Activated CD4-positive, alpha-beta memory T cell treated with anti-CD3 and anti-CD28 coated beads for 36 hours (primary cell): ENCODE measurements at regions of chr13 and their contacts with region 1.

Region 1: GRCh38 chr13:48492470-48493065 is 40.3 kb downstream of the RCBTB2 start:
- DNase-seq: peak; percentile 80
- H3K4me3 Mint-ChIP-seq: no peak overlapping the region
- H3K27ac Mint-ChIP-seq: no peak overlapping the region
- H3K4me1 Mint-ChIP-seq: peaks cover 41% of the 10 kb centered on the region
- H3K27me3 Mint-ChIP-seq: no peaks in the 10 kb centered on the region

Region 2: GRCh38 chr13:48412881-48413351 is 79.7 kb before region 1 on chr13 and contains the start of gene LPAR6:
- CTCF ChIA-PET with region 1: no interaction called
- POLR2A ChIA-PET with region 1: no interaction called
- intact Hi-C with region 1: loop called (anchors 2 kb)
- DNase-seq: peak; percentile 23
- H3K4me3 Mint-ChIP-seq: peak within 1 kb of the TSS; percentile 94
- H3K27ac Mint-ChIP-seq: peak within 1 kb of the TSS; percentile 97
- H3K4me1 Mint-ChIP-seq: peaks cover 41% of the 10 kb centered on the region
- H3K27me3 Mint-ChIP-seq: no peaks in the 10 kb centered on the region
- total RNA-seq, gene LPAR6: 8.8 TPM

Region 3: GRCh38 chr13:48448959-48449614 is 43.5 kb before region 1 on chr13:
- CTCF ChIA-PET with region 1: no interaction called
- POLR2A ChIA-PET with region 1: no interaction called
- intact Hi-C with region 1: loop called (anchors 2 kb)
- DNase-seq: no peak
- H3K4me3 Mint-ChIP-seq: no peak overlapping the region
- H3K27ac Mint-ChIP-seq: no peak overlapping the region
- H3K4me1 Mint-ChIP-seq: peaks cover 37% of the 10 kb centered on the region
- H3K27me3 Mint-ChIP-seq: no peaks in the 10 kb centered on the region

Region 4: GRCh38 chr13:48532506-48533499 is 40.2 kb after region 1 on chr13 and contains the start of gene RCBTB2:
- CTCF ChIA-PET with region 1: no interaction called
- POLR2A ChIA-PET with region 1: interaction called, 3 read pairs
- intact Hi-C with region 1: loop called (anchors 2 kb)
- DNase-seq: peak; percentile 99
- H3K4me3 Mint-ChIP-seq: peak within 1 kb of the TSS; percentile 92
- H3K27ac Mint-ChIP-seq: peak within 1 kb of the TSS; percentile 99
- H3K4me1 Mint-ChIP-seq: peaks cover 28% of the 10 kb centered on the region
- H3K27me3 Mint-ChIP-seq: no peaks in the 10 kb centered on the region
- total RNA-seq, gene RCBTB2: 1.5 to 1.8 TPM

Region 5: DNA sequence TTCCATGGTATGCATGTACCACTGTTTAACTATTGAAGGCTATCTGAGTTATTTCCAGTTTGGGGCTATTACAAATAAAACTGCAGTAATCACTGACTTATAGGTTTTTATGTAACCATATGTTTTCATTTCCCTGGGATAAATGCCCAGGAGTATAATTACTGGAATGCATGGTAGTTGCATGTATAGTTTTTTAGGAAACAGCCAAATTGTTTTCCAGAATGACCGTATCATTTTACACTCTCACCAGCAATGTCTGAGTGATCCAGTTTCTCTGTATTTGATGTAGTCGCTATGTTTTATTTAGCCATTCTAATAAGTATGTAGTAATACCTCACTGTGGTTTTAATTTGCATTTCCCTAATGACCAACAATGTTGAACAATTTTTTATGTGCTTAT is 203.2 kb after region 1 on chr13:
- CTCF ChIA-PET with region 1: no interaction called
- POLR2A ChIA-PET with region 1: no interaction called
- intact Hi-C with region 1: no loop called
- DNase-seq: no peak
- H3K4me3 Mint-ChIP-seq: no peak overlapping the region
- H3K27ac Mint-ChIP-seq: no peak overlapping the region
- H3K4me1 Mint-ChIP-seq: no peaks in the 10 kb centered on the region
- H3K27me3 Mint-ChIP-seq: no peaks in the 10 kb centered on the region

Region 6: DNA sequence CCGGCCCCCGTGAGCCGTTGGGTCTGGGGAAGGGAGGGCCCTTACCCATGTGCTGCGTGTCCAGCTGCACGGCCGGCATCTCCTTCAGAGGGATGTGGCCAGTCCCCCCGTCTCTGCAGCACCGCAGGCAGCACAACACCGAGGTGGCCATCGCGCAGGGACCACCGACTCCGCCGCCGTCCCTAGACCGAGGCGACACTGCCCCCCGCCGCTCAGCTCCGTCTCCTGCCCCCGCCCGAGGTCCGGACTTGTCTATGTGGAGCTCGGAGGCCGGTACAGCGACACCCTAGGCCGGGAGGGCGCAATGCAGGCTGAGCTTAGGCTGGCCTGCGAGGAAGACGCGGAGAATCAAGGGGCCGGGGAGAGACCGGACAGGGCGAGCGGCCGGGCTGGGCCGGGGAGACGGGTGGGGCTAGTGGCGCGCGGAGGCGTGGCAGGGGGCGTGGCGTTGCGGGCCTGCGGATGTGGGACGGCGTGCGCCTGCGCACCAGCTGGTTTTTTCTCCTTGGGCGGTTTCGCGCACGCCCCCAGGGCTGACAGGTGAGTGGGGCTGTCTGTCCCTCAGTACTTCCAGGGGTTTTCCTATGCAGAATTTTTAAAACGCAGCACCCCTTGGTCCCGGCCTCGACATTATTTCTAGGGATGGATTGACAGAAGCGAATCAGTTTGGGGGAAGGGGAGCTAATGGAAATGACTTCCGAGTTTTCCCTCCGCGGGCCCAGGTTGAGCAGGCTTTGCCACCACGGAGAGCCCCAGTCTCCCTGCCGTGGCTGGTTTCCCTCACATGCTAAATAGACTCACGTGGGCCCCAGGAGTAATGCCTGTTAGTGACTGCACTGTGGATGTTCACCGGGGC is 1443.7 kb after region 1 on chr13 and contains the start of gene SPRYD7:
- CTCF ChIA-PET with region 1: no interaction called
- POLR2A ChIA-PET with region 1: no interaction called
- intact Hi-C with region 1: loop called (anchors 5 kb)
- DNase-seq: peak; percentile 97
- H3K4me3 Mint-ChIP-seq: peak within 1 kb of the TSS; percentile 92
- H3K27ac Mint-ChIP-seq: peak within 1 kb of the TSS; percentile 77
- H3K4me1 Mint-ChIP-seq: peaks cover 12% of the 10 kb centered on the region
- H3K27me3 Mint-ChIP-seq: no peaks in the 10 kb centered on the region
- total RNA-seq, gene SPRYD7: 4.9 to 5.4 TPM